GM12878 (cell line): ENCODE measurements at regions of chr2 and their contacts with region 1.

Region 1: GRCh38 chr2:227655454-227655853 is 11.2 kb upstream of the SCYGR5 start:
- DNase-seq: no peak
- ATAC-seq: peak; percentile 53
- H3K4me3 ChIP-seq: no peak overlapping the region
- H3K27ac ChIP-seq: no peak overlapping the region
- H3K4me1 ChIP-seq: no peaks in the 10 kb centered on the region
- H3K27me3 ChIP-seq: no peaks in the 10 kb centered on the region
- CTCF ChIP-seq: no peak
- EP300 ChIP-seq: no peak
- POLR2A ChIP-seq: no peak
- RAD21 ChIP-seq: no peak

Region 2: DNA sequence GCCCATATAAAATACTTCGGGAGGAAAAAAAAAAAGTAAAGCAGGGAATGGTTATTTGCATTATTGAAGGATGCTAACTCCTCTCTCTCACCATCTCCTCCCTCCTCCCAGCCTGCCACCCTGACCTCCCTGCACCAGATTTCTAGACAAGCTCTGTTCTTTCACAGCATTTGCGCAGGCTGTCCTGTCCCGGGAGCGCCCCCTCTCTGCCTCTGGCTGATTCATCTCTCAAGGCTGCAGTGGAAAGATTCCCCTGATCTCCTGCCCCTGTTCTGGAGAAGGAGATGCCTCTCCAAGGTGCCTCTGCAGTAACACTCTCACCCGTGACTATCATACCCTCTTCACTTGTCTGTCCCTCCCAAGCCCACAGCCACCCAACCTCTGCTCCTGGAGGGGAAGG is 529.9 kb before region 1 on chr2:
- CTCF ChIA-PET with region 1: interaction called, 3 read pairs
- POLR2A ChIA-PET with region 1: no interaction called
- RAD21 ChIA-PET with region 1: no interaction called
- SMC1A ChIA-PET with region 1: no interaction called
- in situ Hi-C with region 1: no loop called
- intact Hi-C with region 1: loop called (anchors 10 kb)
- DNase-seq: no peak
- ATAC-seq: no peak
- H3K4me3 ChIP-seq: no peak overlapping the region
- H3K27ac ChIP-seq: no peak overlapping the region
- H3K4me1 ChIP-seq: no peaks in the 10 kb centered on the region
- H3K27me3 ChIP-seq: no peaks in the 10 kb centered on the region
- CTCF ChIP-seq: peak in 2 of 3 experiments; percentile 5 to 9; a peak in 1 of 6 replicates
- EP300 ChIP-seq: no peak
- POLR2A ChIP-seq: no peak
- RAD21 ChIP-seq: peak; percentile 21; the same call in 1 of the 2 replicates

Region 3: GRCh38 chr2:227643990-227644551 is 11.4 kb before region 1 on chr2:
- CTCF ChIA-PET with region 1: interaction called, 14 read pairs
- POLR2A ChIA-PET with region 1: no interaction called
- RAD21 ChIA-PET with region 1: interaction called, 7 read pairs
- SMC1A ChIA-PET with region 1: interaction called, 10 read pairs
- in situ Hi-C with region 1: no loop called
- intact Hi-C with region 1: no loop called
- DNase-seq: no peak
- ATAC-seq: peak; percentile 64
- H3K4me3 ChIP-seq: no peak overlapping the region
- H3K27ac ChIP-seq: no peak overlapping the region
- H3K4me1 ChIP-seq: no peaks in the 10 kb centered on the region
- H3K27me3 ChIP-seq: peaks cover 0 to 1% of the 10 kb centered on the region in 2 experiments; a peak in 1 of 4 replicates
- CTCF ChIP-seq: peak in 1 of 3 experiments; percentile 31; a peak in 1 of 6 replicates
- EP300 ChIP-seq: no peak
- POLR2A ChIP-seq: no peak
- RAD21 ChIP-seq: no peak

Region 4: GRCh38 chr2:227671170-227672060 is 16.0 kb after region 1 on chr2:
- CTCF ChIA-PET with region 1: interaction called, 11 read pairs
- POLR2A ChIA-PET with region 1: no interaction called
- RAD21 ChIA-PET with region 1: interaction called, 7 read pairs
- SMC1A ChIA-PET with region 1: interaction called, 5 read pairs
- in situ Hi-C with region 1: no loop called
- intact Hi-C with region 1: no loop called
- DNase-seq: no peak
- ATAC-seq: no peak
- H3K4me3 ChIP-seq: no peak overlapping the region
- H3K27ac ChIP-seq: no peak overlapping the region
- H3K4me1 ChIP-seq: no peaks in the 10 kb centered on the region
- H3K27me3 ChIP-seq: no peaks in the 10 kb centered on the region
- CTCF ChIP-seq: no peak
- EP300 ChIP-seq: no peak
- POLR2A ChIP-seq: no peak
- RAD21 ChIP-seq: no peak

Region 5: GRCh38 chr2:227884511-227884947 is 229.1 kb after region 1 on chr2:
- CTCF ChIA-PET with region 1: interaction called, 65 read pairs
- POLR2A ChIA-PET with region 1: no interaction called
- RAD21 ChIA-PET with region 1: interaction called, 9 read pairs
- SMC1A ChIA-PET with region 1: interaction called, 11 read pairs
- in situ Hi-C with region 1: loop called (anchors 5 kb)
- intact Hi-C with region 1: loop called (anchors 1 kb)
- DNase-seq: no peak
- ATAC-seq: peak; percentile 99
- H3K4me3 ChIP-seq: no peak overlapping the region
- H3K27ac ChIP-seq: no peak overlapping the region
- H3K4me1 ChIP-seq: no peaks in the 10 kb centered on the region
- H3K27me3 ChIP-seq: 0 out of 4 replicates have a peak, but pooled peaks cover 0 to 2% of the 10 kb centered on the region in 2 experiments
- CTCF ChIP-seq: peak; percentile 85 to 96 (median 96)
- EP300 ChIP-seq: no peak
- POLR2A ChIP-seq: no peak
- RAD21 ChIP-seq: peak; percentile 67

Region 6: GRCh38 chr2:228131833-228132232 is 476.4 kb after region 1 on chr2:
- CTCF ChIA-PET with region 1: no interaction called
- POLR2A ChIA-PET with region 1: no interaction called
- RAD21 ChIA-PET with region 1: no interaction called
- SMC1A ChIA-PET with region 1: no interaction called
- in situ Hi-C with region 1: no loop called
- intact Hi-C with region 1: no loop called
- DNase-seq: no peak
- ATAC-seq: peak; percentile 59
- H3K4me3 ChIP-seq: no peak overlapping the region
- H3K27ac ChIP-seq: no peak overlapping the region
- H3K4me1 ChIP-seq: no peaks in the 10 kb centered on the region
- H3K27me3 ChIP-seq: no peaks in the 10 kb centered on the region
- CTCF ChIP-seq: no peak
- EP300 ChIP-seq: no peak
- POLR2A ChIP-seq: no peak
- RAD21 ChIP-seq: no peak